Natural killer cell (primary cell): ENCODE measurements at regions of chr15 and their contacts with region 1.

Region 1: DNA sequence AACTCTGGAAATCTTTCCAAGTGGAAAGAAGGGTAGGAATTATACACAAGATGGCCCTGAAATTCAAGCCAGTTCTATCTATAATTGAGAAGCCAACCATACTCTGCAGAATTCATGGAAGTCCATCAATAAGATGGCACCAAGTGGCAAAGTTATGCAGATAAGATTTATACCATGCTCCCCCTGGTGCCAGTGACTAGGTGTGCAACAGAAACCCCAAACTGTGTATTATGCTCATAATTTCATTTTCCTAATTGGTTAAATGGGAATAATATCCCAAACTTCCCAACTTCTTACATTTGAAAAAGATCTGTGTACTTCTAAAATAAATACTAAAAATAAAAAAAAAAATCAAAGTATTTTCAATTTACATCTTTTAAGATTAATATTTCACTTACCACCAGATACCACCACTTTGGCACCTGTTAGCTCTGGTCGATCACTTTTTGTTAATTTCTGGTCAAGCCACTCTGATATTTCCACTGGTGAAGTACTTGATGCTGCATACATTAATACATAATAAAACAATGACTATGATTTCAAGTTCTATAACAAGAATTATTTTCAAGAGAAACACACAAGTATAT is 25.9 kb downstream of the ETFA start:
- DNase-seq: peak in 1 of 2 donors; percentile 52
- ATAC-seq: no peak
- H3K4me3 ChIP-seq: no peak overlapping the region
- H3K4me3 Mint-ChIP-seq: no peak overlapping the region
- H3K27ac ChIP-seq: no peak overlapping the region
- H3K27ac Mint-ChIP-seq: peak overlapping the region; percentile 86 to 89
- H3K4me1 ChIP-seq: peaks cover 16% of the 10 kb centered on the region
- H3K4me1 Mint-ChIP-seq: peaks cover 28 to 39% of the 10 kb centered on the region in 2 donors
- H3K27me3 ChIP-seq: no peaks in the 10 kb centered on the region
- H3K27me3 Mint-ChIP-seq: no peaks in the 10 kb centered on the region
- CTCF ChIP-seq: peak; percentile 49

Region 2: DNA sequence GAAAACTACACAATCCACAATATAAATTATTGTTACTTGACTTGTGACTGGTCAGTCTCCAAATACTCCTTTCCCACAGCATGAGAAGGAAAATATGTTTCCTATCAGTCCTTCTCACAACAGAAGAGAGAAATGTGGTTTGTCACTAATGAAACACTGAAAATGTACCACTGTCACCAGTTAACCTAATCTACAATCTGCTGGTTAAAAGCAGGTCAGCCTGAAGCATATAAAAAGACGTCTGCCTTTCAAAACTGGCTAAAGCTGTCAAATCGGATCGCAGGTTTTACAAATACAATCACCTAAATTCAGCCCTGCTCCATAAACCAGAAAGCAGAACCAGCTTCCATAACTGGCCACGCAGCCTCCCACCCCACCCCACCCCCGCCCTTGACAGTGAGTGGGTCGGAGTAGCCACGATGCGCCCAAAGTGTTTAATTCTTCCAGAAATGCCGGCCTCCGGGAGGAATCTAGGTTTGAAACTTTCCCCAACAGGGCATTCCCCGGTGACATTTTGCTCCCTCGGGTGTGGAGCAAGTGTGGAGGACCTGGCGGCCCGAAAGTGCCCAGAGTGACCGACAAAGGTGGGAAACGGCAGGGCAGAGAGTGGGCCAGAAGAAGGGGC is 25.3 kb after region 1 on chr15:
- intact Hi-C with region 1: loop called (anchors 1 kb)
- DNase-seq: peak; percentile 23 to 50
- ATAC-seq: peak in 2 of 3 donors; percentile 15 to 19
- H3K4me3 ChIP-seq: peak overlapping the region; percentile 81
- H3K4me3 Mint-ChIP-seq: peak overlapping the region; percentile 90
- H3K27ac ChIP-seq: peak overlapping the region; percentile 83
- H3K27ac Mint-ChIP-seq: peak overlapping the region; percentile 85 to 90
- H3K4me1 ChIP-seq: peaks cover 14% of the 10 kb centered on the region
- H3K4me1 Mint-ChIP-seq: peaks cover 41% of the 10 kb centered on the region in 2 donors
- H3K27me3 ChIP-seq: no peaks in the 10 kb centered on the region
- H3K27me3 Mint-ChIP-seq: no peaks in the 10 kb centered on the region
- CTCF ChIP-seq: no peak

Region 3: DNA sequence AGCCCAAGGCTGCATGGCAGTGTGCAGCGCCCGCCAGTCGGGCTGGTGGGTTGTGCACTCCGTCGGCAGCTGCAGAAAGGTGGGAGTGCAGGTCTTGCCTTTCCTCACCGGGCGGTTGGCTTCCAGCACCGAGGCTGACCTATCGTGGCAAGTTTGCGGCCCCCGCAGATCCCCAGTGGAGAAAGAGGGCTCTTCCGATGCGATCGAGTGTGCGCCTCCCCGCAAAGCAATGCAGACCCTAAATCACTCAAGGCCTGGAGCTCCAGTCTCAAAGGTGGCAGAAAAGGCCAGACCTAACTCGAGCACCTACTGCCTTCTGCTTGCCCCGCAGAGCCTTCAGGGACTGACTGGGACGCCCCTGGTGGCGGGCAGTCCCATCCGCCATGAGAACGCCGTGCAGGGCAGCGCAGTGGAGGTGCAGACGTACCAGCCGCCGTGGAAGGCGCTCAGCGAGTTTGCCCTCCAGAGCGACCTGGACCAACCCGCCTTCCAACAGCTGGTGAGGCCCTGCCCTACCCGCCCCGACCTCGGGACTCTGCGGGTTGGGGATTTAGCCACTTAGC is 55.6 kb after region 1 on chr15:
- intact Hi-C with region 1: loop called (anchors 5 kb)
- DNase-seq: peak; percentile 51 to 74
- ATAC-seq: peak; percentile 65 to 70 (median 68)
- H3K4me3 ChIP-seq: peak overlapping the region; percentile 32
- H3K4me3 Mint-ChIP-seq: peak overlapping the region; percentile 90
- H3K27ac ChIP-seq: no peak overlapping the region
- H3K27ac Mint-ChIP-seq: no peak overlapping the region
- H3K4me1 ChIP-seq: peaks cover 76% of the 10 kb centered on the region
- H3K4me1 Mint-ChIP-seq: peaks cover 64 to 75% of the 10 kb centered on the region in 2 donors
- H3K27me3 ChIP-seq: peaks cover 85% of the 10 kb centered on the region
- H3K27me3 Mint-ChIP-seq: peaks cover 70 to 72% of the 10 kb centered on the region in 2 donors
- CTCF ChIP-seq: peak; percentile 47

Region 4: GRCh38 chr15:76533060-76533822 is 247.9 kb after region 1 on chr15:
- intact Hi-C with region 1: no loop called
- DNase-seq: no peak
- ATAC-seq: no peak
- H3K4me3 ChIP-seq: no peak overlapping the region
- H3K4me3 Mint-ChIP-seq: no peak overlapping the region
- H3K27ac ChIP-seq: no peak overlapping the region
- H3K27ac Mint-ChIP-seq: no peak overlapping the region
- H3K4me1 ChIP-seq: no peaks in the 10 kb centered on the region
- H3K4me1 Mint-ChIP-seq: no peaks in the 10 kb centered on the region
- H3K27me3 ChIP-seq: no peaks in the 10 kb centered on the region
- H3K27me3 Mint-ChIP-seq: no peaks in the 10 kb centered on the region
- CTCF ChIP-seq: no peak